ENCODE measurements at regions of chr3 and their contacts with region 1.

Region 1: DNA sequence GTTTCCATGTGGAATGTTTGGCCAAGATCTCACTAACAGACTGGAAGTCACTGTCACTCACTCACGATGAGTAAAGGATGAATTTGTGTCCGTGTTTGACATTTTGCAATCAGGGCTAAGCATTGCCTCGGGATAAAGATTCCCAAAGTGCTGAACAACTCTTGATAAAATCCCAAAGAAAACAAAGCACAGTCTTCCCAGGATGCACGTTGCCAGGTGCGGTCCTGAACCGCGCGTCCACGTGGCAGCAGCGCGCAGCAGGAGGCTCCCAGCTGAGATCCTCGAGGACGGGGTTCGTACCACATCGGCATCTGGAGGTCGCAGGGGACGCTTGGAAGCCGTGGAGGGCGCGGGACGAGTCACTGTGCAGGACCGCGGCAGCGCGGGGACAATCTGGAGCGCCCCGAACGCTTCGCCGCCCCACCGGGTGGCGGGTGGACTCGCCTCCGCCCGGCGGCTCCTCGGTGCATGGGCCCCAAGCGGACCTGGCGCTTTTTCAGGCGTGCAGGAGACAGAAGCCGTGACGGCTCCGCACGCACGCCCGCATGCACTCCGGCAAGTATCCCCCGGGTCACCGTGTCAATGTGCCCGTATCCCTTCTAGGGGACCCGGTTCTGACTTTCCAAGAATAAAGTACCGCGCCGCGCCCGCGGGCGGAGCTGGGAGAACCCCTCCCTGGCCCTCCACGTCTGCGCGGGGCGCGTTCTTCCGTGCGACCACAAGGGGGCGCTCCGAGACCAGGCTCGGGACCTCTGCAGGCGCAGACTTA is 17.7 kb downstream of the CPN2 start:
- DNase-seq: peak; percentile 85 to 93
- ATAC-seq: peak; percentile 85 to 98 (median 92)
- H3K4me3 ChIP-seq: peak overlapping the region; percentile 65
- H3K27ac ChIP-seq: no peak overlapping the region
- H3K4me1 ChIP-seq: peaks cover 10% of the 10 kb centered on the region
- H3K27me3 ChIP-seq: no peaks in the 10 kb centered on the region
- CTCF ChIP-seq: peak; percentile 100

Region 2: DNA sequence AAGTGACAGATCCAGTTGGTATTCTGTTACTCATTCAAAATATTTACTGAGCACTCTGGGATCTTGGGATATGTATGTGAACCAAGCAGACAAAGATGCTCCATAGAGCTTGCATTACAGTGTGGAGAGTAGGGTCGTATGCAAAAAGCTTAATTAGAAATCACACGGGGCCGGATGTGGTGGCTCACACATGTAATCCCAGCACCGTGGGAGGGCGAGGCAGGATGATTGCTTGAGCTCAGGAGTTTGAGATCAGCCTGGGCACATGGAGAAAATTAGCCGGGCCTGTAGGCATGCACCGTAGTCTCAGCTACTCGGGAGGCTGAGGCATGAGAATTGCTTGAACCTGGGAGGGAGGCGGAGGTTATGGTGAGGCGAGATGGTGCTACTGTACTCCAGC is 1347.0 kb before region 1 on chr3:
- intact Hi-C with region 1: no loop called
- DNase-seq: no peak
- ATAC-seq: no peak
- H3K4me3 ChIP-seq: no peak overlapping the region
- H3K27ac ChIP-seq: no peak overlapping the region
- H3K4me1 ChIP-seq: no peaks in the 10 kb centered on the region
- H3K27me3 ChIP-seq: no peaks in the 10 kb centered on the region
- CTCF ChIP-seq: no peak

Region 3: GRCh38 chr3:194194051-194194756 is 139.2 kb before region 1 on chr3:
- intact Hi-C with region 1: no loop called
- DNase-seq: no peak
- ATAC-seq: no peak
- H3K4me3 ChIP-seq: no peak overlapping the region
- H3K27ac ChIP-seq: no peak overlapping the region
- H3K4me1 ChIP-seq: no peaks in the 10 kb centered on the region
- H3K27me3 ChIP-seq: no peaks in the 10 kb centered on the region
- CTCF ChIP-seq: no peak

Region 4: GRCh38 chr3:194404365-194405140 is 71.2 kb after region 1 on chr3:
- intact Hi-C with region 1: loop called (anchors 2 kb)
- DNase-seq: no peak
- ATAC-seq: no peak
- H3K4me3 ChIP-seq: no peak overlapping the region
- H3K27ac ChIP-seq: no peak overlapping the region
- H3K4me1 ChIP-seq: no peaks in the 10 kb centered on the region
- H3K27me3 ChIP-seq: peaks cover 0 to 4% (median 0%) of the 10 kb centered on the region in 3 donors
- CTCF ChIP-seq: peak; percentile 73

Region 5: DNA sequence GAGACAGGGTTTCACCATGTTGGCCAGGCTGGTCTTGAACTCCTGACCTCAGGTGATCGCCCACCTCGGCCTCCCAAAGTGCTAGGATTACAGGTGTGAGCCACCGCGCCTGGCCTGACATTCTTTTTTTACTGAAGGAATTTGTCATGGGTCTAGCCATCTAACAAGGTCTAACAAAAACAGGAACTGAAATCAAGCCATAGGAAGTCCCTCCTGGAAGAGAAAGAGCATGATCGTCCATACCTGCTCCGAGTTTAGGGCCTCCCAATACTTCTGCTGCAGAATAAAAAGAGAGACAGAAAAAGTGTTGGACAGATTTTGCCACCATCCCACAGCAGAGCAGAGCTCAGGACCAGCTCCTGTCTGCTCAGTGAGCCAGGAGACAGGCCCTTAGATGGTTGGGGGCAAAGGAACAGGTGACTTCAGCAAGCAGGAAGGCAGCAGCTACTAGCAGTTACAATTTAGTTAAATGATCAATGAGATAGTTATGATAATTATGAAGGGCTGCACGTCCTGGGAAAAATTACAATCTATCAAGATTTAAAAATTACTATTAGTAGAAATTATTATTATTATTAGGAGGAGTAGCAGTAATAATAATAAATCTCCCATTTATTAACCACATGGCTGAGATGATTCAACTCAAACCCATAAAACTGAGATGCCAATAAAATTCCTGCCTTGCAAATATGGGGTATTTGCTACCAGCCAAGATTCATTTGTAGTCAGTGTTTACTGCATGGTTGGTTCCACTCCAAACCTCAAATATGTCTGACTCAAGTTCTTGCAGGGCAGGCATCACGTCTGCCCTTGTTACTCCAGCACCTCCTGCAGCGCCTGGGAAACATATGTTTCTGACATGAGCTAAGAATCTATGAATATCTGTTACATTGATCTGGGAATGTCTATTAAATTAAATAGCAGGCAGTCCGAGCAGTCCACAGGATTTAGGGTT is 259.7 kb after region 1 on chr3:
- intact Hi-C with region 1: loop called (anchors 5 to 10 kb)
- DNase-seq: no peak
- ATAC-seq: peak; percentile 72 to 91 (median 86)
- H3K4me3 ChIP-seq: no peak overlapping the region
- H3K27ac ChIP-seq: peak overlapping the region; percentile 36
- H3K4me1 ChIP-seq: peaks cover 11% of the 10 kb centered on the region
- H3K27me3 ChIP-seq: no peaks in the 10 kb centered on the region
- CTCF ChIP-seq: no peak

Region 6: DNA sequence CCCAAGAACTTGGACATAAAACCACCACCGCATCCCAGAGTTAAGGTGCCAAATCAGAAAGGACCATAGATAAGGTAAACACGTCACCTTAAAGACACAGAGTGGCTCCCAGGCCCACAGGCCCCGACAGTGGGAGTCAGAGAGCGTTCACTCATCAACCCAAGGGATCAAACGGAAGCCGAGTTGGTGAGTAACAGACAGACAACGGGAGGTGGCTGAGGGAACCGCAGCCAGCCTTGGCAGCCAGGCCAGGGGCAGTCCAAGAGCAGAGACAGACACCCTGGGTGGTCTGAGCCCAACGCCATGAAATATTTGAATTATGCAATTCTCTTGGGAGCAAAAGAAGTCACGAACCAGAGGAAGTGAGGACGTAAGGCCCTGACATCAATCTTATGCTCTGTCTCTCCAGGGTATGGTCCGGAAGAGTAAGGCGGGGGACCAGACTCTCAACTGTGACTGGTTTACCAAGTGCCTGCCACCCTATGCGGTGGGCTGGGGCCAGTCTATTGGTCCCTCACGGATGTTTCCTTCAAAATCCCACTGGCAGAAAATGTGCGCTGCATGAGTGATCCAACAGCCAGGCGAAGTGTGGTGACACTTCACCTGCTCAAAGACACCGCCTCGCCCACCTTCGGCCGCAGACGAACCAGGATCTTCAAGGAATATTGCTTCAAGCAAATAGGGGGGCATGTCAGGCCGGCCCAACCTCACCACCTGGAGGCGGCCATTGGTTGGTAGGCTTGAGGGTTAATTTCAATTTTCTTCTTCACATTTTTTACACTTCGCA is 265.6 kb after region 1 on chr3:
- intact Hi-C with region 1: loop called (anchors 5 to 10 kb)
- DNase-seq: peak in 1 of 2 donors; percentile 59
- ATAC-seq: peak in 2 of 4 donors; percentile 28 to 64
- H3K4me3 ChIP-seq: no peak overlapping the region
- H3K27ac ChIP-seq: no peak overlapping the region
- H3K4me1 ChIP-seq: no peaks in the 10 kb centered on the region
- H3K27me3 ChIP-seq: no peaks in the 10 kb centered on the region
- CTCF ChIP-seq: no peak